AG04449 (cell line): ENCODE measurements at regions of chr6 and their contacts with region 1.

Region 1: GRCh38 chr6:118283766-118284165 is 264.3 kb upstream of the PLN start:
- DNase-seq: no peak
- H3K4me3 ChIP-seq: no peak overlapping the region
- CTCF ChIP-seq: peak; percentile 60

Region 2: DNA sequence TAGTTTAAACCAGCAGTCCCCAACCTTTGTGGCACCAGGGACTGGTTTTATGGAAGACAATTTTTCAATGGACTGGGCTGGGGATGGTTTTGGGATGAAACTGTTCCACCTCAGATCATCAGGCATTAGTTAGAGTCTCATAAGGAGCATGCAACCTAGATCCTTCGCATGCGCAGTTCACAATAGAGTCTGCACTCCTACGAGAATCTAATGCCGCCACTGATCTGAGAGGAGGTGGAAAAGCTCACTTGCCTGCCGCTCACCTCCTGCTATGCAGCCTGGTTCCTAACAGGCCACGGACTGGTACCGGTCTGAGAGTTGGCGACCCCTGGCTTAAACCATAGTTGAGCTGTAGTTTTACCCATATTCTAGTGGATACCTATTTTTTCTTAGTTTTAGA is 222.1 kb before region 1 on chr6:
- CTCF ChIA-PET with region 1: no interaction called
- POLR2A ChIA-PET with region 1: no interaction called
- DNase-seq: no peak
- H3K4me3 ChIP-seq: no peak overlapping the region
- CTCF ChIP-seq: no peak

Region 3: DNA sequence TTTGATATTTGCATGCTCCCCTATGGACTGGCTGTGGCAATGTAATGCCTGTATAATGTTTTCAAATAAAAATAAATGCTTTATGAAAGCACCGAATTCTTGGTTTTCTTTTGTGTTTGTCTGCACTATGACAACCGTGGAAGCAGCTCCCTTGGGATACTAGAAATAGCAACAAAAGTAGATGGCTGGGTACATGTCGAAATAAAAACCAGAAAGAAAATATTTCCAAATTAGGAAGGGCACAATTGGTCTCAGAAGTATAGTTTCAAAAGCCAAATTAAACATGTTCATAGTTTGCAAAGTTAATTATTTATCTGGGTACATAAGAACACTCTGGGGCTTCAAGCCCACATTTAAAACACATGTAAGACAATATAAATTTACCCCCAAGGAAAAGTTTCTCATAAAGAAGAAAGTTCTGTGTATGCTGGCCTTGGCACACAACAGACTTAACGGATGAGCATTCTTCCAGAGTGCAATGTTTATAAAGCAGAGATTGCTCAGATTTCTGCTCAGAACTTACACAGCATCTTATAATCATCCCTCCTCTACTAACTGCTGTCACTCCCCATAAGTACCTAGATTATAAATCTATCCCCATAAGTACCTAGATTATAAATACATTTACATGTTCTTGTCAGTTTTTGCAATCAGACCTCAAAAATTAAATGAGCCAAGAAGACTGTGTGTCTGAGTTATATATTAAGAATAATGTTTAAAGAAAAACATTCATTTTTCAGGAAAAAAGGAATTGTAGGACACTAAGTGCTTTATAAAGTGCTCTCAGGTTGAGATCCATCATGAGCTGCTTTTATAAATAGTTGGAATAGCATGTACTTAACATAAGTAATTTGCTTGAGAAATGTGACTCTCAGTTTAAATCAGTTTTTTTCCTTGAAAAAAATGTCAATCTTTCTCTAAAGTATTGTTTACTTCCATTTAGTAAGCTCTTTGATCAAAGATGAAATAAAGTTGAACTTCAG is 34.1 kb after region 1 on chr6:
- CTCF ChIA-PET with region 1: no interaction called
- POLR2A ChIA-PET with region 1: no interaction called
- DNase-seq: no peak
- H3K4me3 ChIP-seq: no peak overlapping the region
- CTCF ChIP-seq: no peak

Region 4: DNA sequence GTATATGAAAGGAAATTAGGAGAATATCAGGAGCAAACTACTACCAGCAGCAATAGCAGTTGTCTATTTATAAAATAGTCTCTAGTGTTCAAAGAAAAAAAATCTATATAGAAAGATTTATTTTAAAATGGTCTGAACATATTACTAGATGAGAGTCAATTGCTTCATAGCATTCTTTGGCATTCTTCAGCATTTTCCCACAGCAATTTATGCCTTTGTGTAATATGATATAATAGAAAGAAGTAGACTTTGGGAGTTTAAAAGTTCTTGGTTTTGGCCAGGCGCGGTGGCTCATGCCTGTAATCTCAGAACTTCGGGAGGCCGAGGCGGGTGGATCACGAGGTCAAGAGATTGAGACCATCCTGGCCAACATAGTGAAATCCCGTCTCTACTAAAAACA is 107.3 kb after region 1 on chr6:
- CTCF ChIA-PET with region 1: no interaction called
- POLR2A ChIA-PET with region 1: no interaction called
- DNase-seq: no peak
- H3K4me3 ChIP-seq: no peak overlapping the region
- CTCF ChIP-seq: no peak

Region 5: DNA sequence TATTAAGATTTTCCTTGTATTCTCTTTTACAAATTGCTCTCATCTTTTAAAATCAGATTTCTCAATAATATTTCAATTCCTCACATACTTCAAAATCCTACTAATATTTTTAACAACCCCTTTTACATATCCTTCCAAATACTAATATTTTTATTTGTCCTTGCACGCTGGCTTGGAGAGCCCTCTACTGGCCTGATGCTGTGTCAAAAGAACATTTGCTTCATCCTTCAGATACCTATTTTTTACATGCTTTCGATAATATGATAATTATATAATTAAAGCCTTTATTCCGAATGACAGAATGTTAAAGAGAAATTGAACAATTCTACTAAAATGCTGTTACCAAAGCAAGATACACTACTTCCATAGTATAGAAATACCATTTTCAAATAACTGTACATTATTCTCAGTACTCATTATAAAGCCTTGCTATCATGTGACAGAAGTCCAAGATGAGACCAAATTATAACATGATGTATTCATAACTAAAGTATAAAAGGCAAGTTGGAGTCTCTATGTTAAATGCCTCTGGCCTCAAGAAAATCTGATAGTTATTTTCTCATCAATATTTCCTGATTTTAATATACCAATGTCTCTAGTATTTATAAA is 225.3 kb after region 1 on chr6:
- CTCF ChIA-PET with region 1: interaction called, 37 read pairs
- POLR2A ChIA-PET with region 1: no interaction called
- DNase-seq: no peak
- H3K4me3 ChIP-seq: no peak overlapping the region
- CTCF ChIP-seq: peak; percentile 48

Region 6: GRCh38 chr6:118551063-118552053 is 267.6 kb after region 1 on chr6:
- CTCF ChIA-PET with region 1: interaction called, 32 read pairs
- POLR2A ChIA-PET with region 1: no interaction called
- DNase-seq: peak; percentile 42
- H3K4me3 ChIP-seq: no peak overlapping the region
- CTCF ChIP-seq: peak; percentile 60

Region 7: GRCh38 chr6:118580585-118581419 is 297.0 kb after region 1 on chr6:
- CTCF ChIA-PET with region 1: interaction called, 94 read pairs
- POLR2A ChIA-PET with region 1: no interaction called
- DNase-seq: peak; percentile 33
- H3K4me3 ChIP-seq: no peak overlapping the region
- CTCF ChIP-seq: peak; percentile 54

Region 8: GRCh38 chr6:118776607-118777549 is 493.1 kb after region 1 on chr6:
- CTCF ChIA-PET with region 1: interaction called, 12 read pairs
- POLR2A ChIA-PET with region 1: no interaction called
- DNase-seq: peak; percentile 33
- H3K4me3 ChIP-seq: no peak overlapping the region
- CTCF ChIP-seq: peak; percentile 66